ENCODE measurements at regions of chr12 and their contacts with region 1.

Region 1: GRCh38 chr12:121773011-121773777 is 20.3 kb downstream of the RHOF start:
- DNase-seq: peak; percentile 57 to 72 (median 68)
- H3K4me3 ChIP-seq: no peak overlapping the region
- H3K4me3 Mint-ChIP-seq: no peak overlapping the region
- H3K27ac ChIP-seq: no peak overlapping the region
- H3K27ac Mint-ChIP-seq: peak overlapping the region in 1 of 7 donors; percentile 20
- H3K4me1 ChIP-seq: peaks cover 7 to 16% of the 10 kb centered on the region in 2 donors
- H3K4me1 Mint-ChIP-seq: peaks cover 13% of the 10 kb centered on the region
- H3K27me3 ChIP-seq: no peaks in the 10 kb centered on the region
- H3K27me3 Mint-ChIP-seq: peaks cover 0 to 1% (median 0%) of the 10 kb centered on the region in 3 donors
- CTCF ChIP-seq: peak; percentile 93

Region 2: GRCh38 chr12:121499929-121500793 is 273.0 kb before region 1 on chr12:
- intact Hi-C with region 1: loop called in 1 of 2 experiments (anchors 10 kb)
- DNase-seq: peak; percentile 53 to 63 (median 55)
- H3K4me3 ChIP-seq: no peak overlapping the region
- H3K4me3 Mint-ChIP-seq: no peak overlapping the region
- H3K27ac ChIP-seq: no peak overlapping the region
- H3K27ac Mint-ChIP-seq: peak overlapping the region in 2 of 7 donors; percentile 41 to 46
- H3K4me1 ChIP-seq: peaks cover 6 to 8% of the 10 kb centered on the region in 2 donors
- H3K4me1 Mint-ChIP-seq: peaks cover 8% of the 10 kb centered on the region
- H3K27me3 ChIP-seq: no peaks in the 10 kb centered on the region
- H3K27me3 Mint-ChIP-seq: peaks cover 0 to 3% (median 2%) of the 10 kb centered on the region in 3 donors
- CTCF ChIP-seq: peak; percentile 97

Region 3: DNA sequence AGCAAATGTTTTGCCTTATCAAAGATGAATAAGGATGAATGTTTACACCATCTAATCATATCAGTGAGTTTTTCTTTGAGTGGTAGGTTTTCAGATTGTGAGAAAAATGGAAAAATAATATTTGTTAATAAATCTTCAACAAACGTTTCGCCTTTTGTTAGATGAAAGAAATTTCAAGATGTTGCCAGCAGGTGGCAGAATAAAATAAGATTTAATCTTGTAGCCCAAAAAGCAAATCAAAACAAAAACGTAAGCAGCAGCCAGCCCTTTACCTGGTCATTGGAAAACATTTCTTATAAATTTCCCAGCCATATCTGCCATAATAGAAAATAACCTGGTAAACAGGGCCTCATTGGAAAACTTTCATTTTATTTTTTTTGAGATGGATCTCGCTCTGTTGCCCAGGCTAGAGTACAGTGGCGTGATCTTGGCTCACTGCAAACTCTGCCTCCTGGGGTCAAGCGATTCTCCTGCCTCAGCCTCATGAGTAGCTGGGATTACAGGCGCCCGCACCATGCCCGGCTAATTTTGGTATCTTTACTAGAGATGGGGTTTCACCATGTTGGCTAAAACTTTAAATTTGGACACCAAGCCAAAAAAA is 76.0 kb before region 1 on chr12:
- intact Hi-C with region 1: loop called (anchors 1 to 2 kb)
- DNase-seq: peak in 2 of 3 donors; percentile 31 to 66
- H3K4me3 ChIP-seq: no peak overlapping the region
- H3K4me3 Mint-ChIP-seq: peak overlapping the region in 1 of 2 donors; percentile 7
- H3K27ac ChIP-seq: no peak overlapping the region
- H3K27ac Mint-ChIP-seq: peak overlapping the region in 1 of 7 donors; percentile 31
- H3K4me1 ChIP-seq: peaks cover 0 to 3% of the 10 kb centered on the region in 2 donors
- H3K4me1 Mint-ChIP-seq: peaks cover 1% of the 10 kb centered on the region
- H3K27me3 ChIP-seq: no peaks in the 10 kb centered on the region
- H3K27me3 Mint-ChIP-seq: peaks cover 3 to 6% (median 3%) of the 10 kb centered on the region in 3 donors
- CTCF ChIP-seq: peak; percentile 70

Region 4: GRCh38 chr12:121811434-121812319 is 38.5 kb after region 1 on chr12:
- intact Hi-C with region 1: loop called (anchors 1 to 5 kb)
- DNase-seq: peak in 2 of 3 donors; percentile 59 to 68
- H3K4me3 ChIP-seq: peak overlapping the region; percentile 66 to 89 (median 67)
- H3K4me3 Mint-ChIP-seq: peak overlapping the region; percentile 79 to 90
- H3K27ac ChIP-seq: peak overlapping the region; percentile 62 to 79
- H3K27ac Mint-ChIP-seq: peak overlapping the region; percentile 75 to 90 (median 79)
- H3K4me1 ChIP-seq: peaks cover 51 to 62% of the 10 kb centered on the region in 2 donors
- H3K4me1 Mint-ChIP-seq: peaks cover 52% of the 10 kb centered on the region
- H3K27me3 ChIP-seq: no peaks in the 10 kb centered on the region
- H3K27me3 Mint-ChIP-seq: peaks cover 0 to 3% (median 0%) of the 10 kb centered on the region in 3 donors
- CTCF ChIP-seq: peak; percentile 99

Region 5: GRCh38 chr12:123043536-123044001 is 1270.4 kb after region 1 on chr12:
- intact Hi-C with region 1: no loop called
- DNase-seq: peak; percentile 35 to 58 (median 50)
- H3K4me3 ChIP-seq: no peak overlapping the region
- H3K4me3 Mint-ChIP-seq: peak overlapping the region in 1 of 2 donors; percentile 17
- H3K27ac ChIP-seq: no peak overlapping the region
- H3K27ac Mint-ChIP-seq: no peak overlapping the region
- H3K4me1 ChIP-seq: peaks cover 6 to 11% of the 10 kb centered on the region in 2 donors
- H3K4me1 Mint-ChIP-seq: peaks cover 33% of the 10 kb centered on the region
- H3K27me3 ChIP-seq: no peaks in the 10 kb centered on the region
- H3K27me3 Mint-ChIP-seq: peaks cover 0 to 6% (median 0%) of the 10 kb centered on the region in 3 donors
- CTCF ChIP-seq: peak; percentile 42

Measured in CD14-positive monocyte (primary cell).